ENCODE measurements at regions of chr1 and their contacts with region 1.

Region 1: GRCh38 chr1:212035123-212035834 is at the starts of genes DTL and INTS7:
- DNase-seq: peak; percentile 99
- ATAC-seq: peak; percentile 86
- H3K4me3 ChIP-seq: peak within 1 kb of the TSS; percentile 58 to 95 (median 84)
- H3K4me3 Mint-ChIP-seq: peak within 1 kb of the TSS; percentile 99
- H3K27ac ChIP-seq: peak within 1 kb of the TSS; percentile 71 to 75
- H3K27ac Mint-ChIP-seq: peak within 1 kb of the TSS; percentile 95
- H3K4me1 ChIP-seq: peaks cover 16 to 19% of the 10 kb centered on the region in 2 donors
- H3K4me1 Mint-ChIP-seq: peaks cover 50% of the 10 kb centered on the region
- H3K27me3 ChIP-seq: no peaks in the 10 kb centered on the region
- H3K27me3 Mint-ChIP-seq: no peaks in the 10 kb centered on the region
- CTCF ChIP-seq: peak; percentile 95
- total RNA-seq, gene DTL: 0.10 and 0.37 TPM in 2 replicates
- total RNA-seq, gene INTS7: 15.9 and 19.2 TPM in 2 replicates

Region 2: DNA sequence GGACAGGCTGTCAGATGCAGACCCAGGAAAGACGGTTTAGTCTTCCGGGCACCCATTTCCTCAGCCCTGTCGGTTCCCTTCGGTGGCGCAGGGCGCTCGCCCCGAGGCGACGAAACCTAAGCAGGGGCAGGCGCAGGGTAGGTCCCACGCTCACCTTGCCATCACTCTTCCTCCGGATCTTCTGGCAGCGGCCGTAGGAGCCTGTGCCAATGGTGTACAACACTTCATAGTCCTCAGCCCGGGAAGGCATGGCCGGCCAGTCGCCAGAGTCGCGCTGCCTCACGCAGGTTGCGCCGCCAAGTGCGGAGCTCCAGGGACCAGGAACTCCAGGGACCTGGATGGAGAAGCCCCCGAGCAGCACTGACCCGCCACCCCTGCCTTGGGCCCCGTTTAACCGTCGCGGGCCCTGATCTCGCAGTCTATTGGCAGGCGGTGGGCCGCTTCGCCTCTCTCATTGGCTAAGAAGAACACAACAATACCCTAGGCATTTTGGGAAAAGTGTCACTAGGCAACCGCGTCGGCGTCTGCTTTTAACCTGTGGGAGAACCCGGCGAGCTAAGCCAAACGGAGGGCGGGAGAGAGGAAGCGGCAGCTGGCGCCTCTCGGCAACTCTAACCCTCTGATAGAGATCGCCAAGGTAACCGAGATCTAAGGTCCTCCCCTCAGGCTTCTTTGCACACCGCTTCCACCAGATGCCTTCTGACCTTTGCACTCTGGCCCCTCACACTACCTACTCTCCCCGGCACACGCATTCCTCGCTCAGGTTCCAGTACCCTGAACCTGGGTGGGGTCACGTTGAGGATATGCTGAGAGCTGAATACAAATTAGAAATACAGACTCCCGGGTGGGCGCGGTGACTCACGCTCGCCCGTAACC is 359.8 kb before region 1 on chr1 and contains the start of gene NEK2:
- CTCF ChIA-PET with region 1: interaction called, 41 read pairs
- POLR2A ChIA-PET with region 1: interaction called, 9 read pairs
- intact Hi-C with region 1: loop called (anchors 1 kb)
- DNase-seq: peak; percentile 82
- ATAC-seq: peak; percentile 88
- H3K4me3 ChIP-seq: peak within 1 kb of the TSS; percentile 19 to 80 (median 68)
- H3K4me3 Mint-ChIP-seq: peak within 1 kb of the TSS; percentile 93
- H3K27ac ChIP-seq: peak within 1 kb of the TSS in 1 of 2 donors; percentile 49
- H3K27ac Mint-ChIP-seq: peak within 1 kb of the TSS; percentile 66
- H3K4me1 ChIP-seq: peaks cover 21 to 30% of the 10 kb centered on the region in 2 donors
- H3K4me1 Mint-ChIP-seq: peaks cover 35% of the 10 kb centered on the region
- H3K27me3 ChIP-seq: no peaks in the 10 kb centered on the region
- H3K27me3 Mint-ChIP-seq: no peaks in the 10 kb centered on the region
- CTCF ChIP-seq: no peak
- total RNA-seq, gene NEK2: 0.32 TPM in 1 of 2 replicates, not detected in the other

Region 3: DNA sequence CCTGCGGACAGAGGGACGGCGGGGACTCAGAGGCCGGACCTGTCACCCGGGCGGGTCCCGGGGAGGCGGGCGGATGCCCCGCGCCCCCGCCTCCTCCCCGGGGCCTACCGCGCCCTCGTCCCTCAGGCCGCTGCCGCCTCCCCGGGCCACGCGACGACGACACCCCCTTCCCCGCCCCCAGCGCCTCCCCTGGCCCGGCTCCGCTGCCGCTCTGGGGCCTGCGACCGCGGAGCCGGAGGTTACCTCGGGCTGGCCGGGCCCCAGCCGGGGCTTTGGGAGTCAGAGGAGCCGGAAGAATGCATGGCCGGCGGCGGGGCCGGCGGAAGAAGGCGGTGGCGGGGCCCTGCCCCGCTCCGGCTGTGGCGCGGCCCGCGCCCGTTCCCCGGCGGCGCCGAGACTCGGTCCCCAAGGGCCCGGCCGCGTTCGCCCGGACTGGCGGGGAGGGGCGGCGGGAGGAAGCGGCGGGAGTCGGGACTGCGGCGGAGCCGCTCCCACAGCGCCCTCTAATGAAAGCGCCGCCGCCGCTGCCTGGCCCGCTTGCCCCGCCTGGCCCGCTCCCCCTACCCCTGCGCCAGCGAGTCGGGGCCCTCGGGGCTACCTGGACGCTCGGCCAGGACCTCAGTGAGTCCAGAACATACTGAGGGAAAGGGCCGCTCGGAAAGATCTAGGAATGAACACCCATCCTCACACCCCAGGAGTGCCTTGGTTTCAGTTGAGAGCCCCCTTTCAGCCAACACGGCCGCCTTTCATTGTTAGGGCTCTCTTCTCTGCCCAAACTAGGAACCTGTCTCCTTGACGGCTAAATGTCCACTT is 204.7 kb before region 1 on chr1 and contains the start of gene LPGAT1:
- CTCF ChIA-PET with region 1: interaction called, 3 read pairs
- POLR2A ChIA-PET with region 1: no interaction called
- intact Hi-C with region 1: loop called (anchors 1 kb)
- DNase-seq: peak; percentile 86
- ATAC-seq: peak; percentile 85
- H3K4me3 ChIP-seq: peak within 1 kb of the TSS; percentile 48 to 85 (median 72)
- H3K4me3 Mint-ChIP-seq: peak within 1 kb of the TSS; percentile 94
- H3K27ac ChIP-seq: peak within 1 kb of the TSS; percentile 39 to 80
- H3K27ac Mint-ChIP-seq: peak within 1 kb of the TSS; percentile 91
- H3K4me1 ChIP-seq: peaks cover 44 to 49% of the 10 kb centered on the region in 2 donors
- H3K4me1 Mint-ChIP-seq: peaks cover 58% of the 10 kb centered on the region
- H3K27me3 ChIP-seq: no peaks in the 10 kb centered on the region
- H3K27me3 Mint-ChIP-seq: no peaks in the 10 kb centered on the region
- CTCF ChIP-seq: peak; percentile 76
- total RNA-seq, gene LPGAT1: 60.1 and 63.8 TPM in 2 replicates

Region 4: DNA sequence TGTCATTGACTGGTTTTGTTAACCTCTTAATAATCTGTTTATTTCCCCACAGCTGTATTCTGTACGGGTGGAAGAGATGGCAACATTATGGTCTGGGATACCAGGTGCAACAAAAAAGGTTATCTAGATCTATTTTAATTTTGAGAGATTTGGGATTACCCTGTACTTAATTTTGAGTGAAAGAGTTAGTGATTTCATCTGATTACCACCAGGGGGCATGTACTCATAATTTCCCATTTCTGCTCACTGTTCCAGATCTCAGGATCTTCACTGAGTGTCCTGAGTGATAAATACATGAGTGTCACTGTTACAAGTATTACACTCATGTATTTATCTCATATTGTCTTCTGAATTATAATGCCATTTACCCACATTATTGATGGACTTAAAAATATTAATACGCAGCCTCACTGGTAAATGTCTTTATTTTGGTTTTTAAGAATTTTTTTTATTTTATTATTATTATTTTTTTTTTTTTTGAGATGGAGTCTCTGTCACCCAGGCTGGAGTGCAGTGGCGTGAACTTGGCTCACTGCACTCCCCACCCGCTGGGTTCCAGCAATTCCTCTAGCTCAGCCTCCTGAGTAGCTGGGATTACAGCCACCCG is 27.7 kb after region 1 on chr1:
- CTCF ChIA-PET with region 1: interaction called, 15 read pairs
- POLR2A ChIA-PET with region 1: no interaction called
- intact Hi-C with region 1: no loop called
- DNase-seq: peak; percentile 56
- ATAC-seq: no peak
- H3K4me3 ChIP-seq: no peak overlapping the region
- H3K4me3 Mint-ChIP-seq: no peak overlapping the region
- H3K27ac ChIP-seq: no peak overlapping the region
- H3K27ac Mint-ChIP-seq: no peak overlapping the region
- H3K4me1 ChIP-seq: no peaks in the 10 kb centered on the region
- H3K4me1 Mint-ChIP-seq: no peaks in the 10 kb centered on the region
- H3K27me3 ChIP-seq: no peaks in the 10 kb centered on the region
- H3K27me3 Mint-ChIP-seq: no peaks in the 10 kb centered on the region
- CTCF ChIP-seq: peak; percentile 95

Region 5: DNA sequence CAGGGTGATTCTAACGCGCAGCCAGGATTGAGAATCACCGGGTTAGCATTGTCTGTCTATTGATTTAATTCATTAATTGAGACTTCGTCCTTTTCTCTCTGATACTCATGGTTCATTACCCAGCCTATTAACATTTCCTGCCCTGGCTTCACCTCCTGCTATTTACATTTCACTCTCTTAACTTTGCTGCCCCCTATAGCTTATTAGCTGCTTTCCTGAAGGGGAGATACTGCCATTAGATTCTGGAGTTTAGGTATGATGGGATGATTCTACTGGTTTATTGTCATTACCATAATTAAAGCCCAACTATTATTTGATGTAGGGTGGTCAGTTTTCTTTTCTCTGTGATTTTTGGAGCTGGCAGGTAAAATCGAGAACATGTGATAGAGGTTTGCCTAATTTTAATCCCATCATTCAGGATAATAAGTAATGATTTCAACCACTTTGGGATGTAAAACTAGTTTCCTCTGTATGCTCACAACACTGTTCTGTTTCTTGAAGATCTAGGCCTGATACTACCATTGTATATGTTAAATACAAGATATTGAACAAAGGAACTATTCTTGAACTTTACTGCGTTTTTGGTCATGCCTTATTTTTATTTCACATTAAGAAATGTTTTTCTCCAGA is 256.3 kb after region 1 on chr1:
- CTCF ChIA-PET with region 1: interaction called, 15 read pairs
- POLR2A ChIA-PET with region 1: interaction called, 4 read pairs
- intact Hi-C with region 1: no loop called
- DNase-seq: peak; percentile 78
- ATAC-seq: peak; percentile 87
- H3K4me3 ChIP-seq: no peak overlapping the region
- H3K4me3 Mint-ChIP-seq: peak overlapping the region; percentile 21
- H3K27ac ChIP-seq: no peak overlapping the region
- H3K27ac Mint-ChIP-seq: peak overlapping the region; percentile 46
- H3K4me1 ChIP-seq: peaks cover 29 to 61% of the 10 kb centered on the region in 2 donors
- H3K4me1 Mint-ChIP-seq: peaks cover 77% of the 10 kb centered on the region
- H3K27me3 ChIP-seq: no peaks in the 10 kb centered on the region
- H3K27me3 Mint-ChIP-seq: no peaks in the 10 kb centered on the region
- CTCF ChIP-seq: peak; percentile 82

Region 6: DNA sequence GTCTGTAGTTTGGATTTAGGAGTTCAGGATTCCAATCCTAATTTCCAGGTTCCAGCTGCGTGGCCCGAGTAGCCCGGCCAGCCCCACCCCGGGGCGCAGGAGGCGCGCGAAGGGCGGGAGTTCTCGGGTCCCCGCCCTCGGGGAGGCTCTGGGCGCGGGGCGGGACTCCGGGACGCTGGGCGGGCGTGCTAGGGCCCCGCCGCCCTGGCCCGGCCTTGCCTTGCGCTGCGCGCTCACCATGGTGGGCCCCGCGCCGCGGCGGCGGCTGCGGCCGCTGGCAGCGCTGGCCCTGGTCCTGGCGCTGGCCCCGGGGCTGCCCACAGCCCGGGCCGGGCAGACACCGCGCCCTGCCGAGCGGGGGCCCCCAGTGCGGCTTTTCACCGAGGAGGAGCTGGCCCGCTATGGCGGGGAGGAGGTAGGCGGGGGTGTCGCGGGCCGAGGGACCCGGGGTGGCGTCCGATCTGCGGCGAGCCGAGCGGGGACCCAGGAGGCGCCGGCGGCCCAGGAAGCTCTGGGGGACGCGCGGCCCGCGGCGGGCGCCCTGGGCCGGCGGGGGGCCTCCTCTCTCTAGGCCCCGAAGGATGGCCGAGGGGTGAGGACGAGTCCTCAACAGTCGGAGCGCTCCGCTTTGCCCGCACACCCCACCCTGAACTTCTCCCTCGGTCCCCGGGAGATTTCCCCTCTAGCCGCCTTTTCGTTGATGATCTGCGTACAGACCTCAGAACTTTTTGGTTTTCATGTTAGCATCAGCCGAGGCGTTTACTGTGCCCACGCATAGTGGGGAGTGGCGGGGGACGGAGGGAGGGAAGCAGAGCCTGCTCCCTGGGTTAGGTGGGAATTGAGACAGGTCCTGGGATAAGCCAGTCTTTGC is 397.7 kb after region 1 on chr1 and contains the start of gene NENF:
- CTCF ChIA-PET with region 1: no interaction called
- POLR2A ChIA-PET with region 1: no interaction called
- intact Hi-C with region 1: loop called (anchors 1 kb)
- DNase-seq: peak; percentile 81
- ATAC-seq: peak; percentile 99
- H3K4me3 ChIP-seq: peak within 1 kb of the TSS; percentile 26 to 82 (median 58)
- H3K4me3 Mint-ChIP-seq: peak within 1 kb of the TSS; percentile 82
- H3K27ac ChIP-seq: peak within 1 kb of the TSS in 1 of 2 donors; percentile 65
- H3K27ac Mint-ChIP-seq: peak within 1 kb of the TSS; percentile 33
- H3K4me1 ChIP-seq: peaks cover 12 to 15% of the 10 kb centered on the region in 2 donors
- H3K4me1 Mint-ChIP-seq: peaks cover 25% of the 10 kb centered on the region
- H3K27me3 ChIP-seq: no peaks in the 10 kb centered on the region
- H3K27me3 Mint-ChIP-seq: no peaks in the 10 kb centered on the region
- CTCF ChIP-seq: no peak
- total RNA-seq, gene NENF: 20.3 and 22.7 TPM in 2 replicates

Region 7: GRCh38 chr1:212857992-212858460 is 822.7 kb after region 1 on chr1 and contains the start of gene FLVCR1:
- CTCF ChIA-PET with region 1: no interaction called
- POLR2A ChIA-PET with region 1: no interaction called
- intact Hi-C with region 1: loop called (anchors 2 kb)
- DNase-seq: peak; percentile 93
- ATAC-seq: peak; percentile 98
- H3K4me3 ChIP-seq: peak within 1 kb of the TSS; percentile 71 to 96 (median 82)
- H3K4me3 Mint-ChIP-seq: peak within 1 kb of the TSS; percentile 95
- H3K27ac ChIP-seq: peak within 1 kb of the TSS; percentile 51 to 85
- H3K27ac Mint-ChIP-seq: peak within 1 kb of the TSS; percentile 96
- H3K4me1 ChIP-seq: peaks cover 25 to 32% of the 10 kb centered on the region in 2 donors
- H3K4me1 Mint-ChIP-seq: peaks cover 22% of the 10 kb centered on the region
- H3K27me3 ChIP-seq: no peaks in the 10 kb centered on the region
- H3K27me3 Mint-ChIP-seq: no peaks in the 10 kb centered on the region
- CTCF ChIP-seq: no peak
- total RNA-seq, gene FLVCR1: 19.2 and 19.7 TPM in 2 replicates